Activated naive CD4-positive, alpha-beta T cell treated with anti-CD3 and anti-CD28 coated beads for 36 hours (primary cell): ENCODE measurements at regions of chr2 and their contacts with region 1.

Region 1: DNA sequence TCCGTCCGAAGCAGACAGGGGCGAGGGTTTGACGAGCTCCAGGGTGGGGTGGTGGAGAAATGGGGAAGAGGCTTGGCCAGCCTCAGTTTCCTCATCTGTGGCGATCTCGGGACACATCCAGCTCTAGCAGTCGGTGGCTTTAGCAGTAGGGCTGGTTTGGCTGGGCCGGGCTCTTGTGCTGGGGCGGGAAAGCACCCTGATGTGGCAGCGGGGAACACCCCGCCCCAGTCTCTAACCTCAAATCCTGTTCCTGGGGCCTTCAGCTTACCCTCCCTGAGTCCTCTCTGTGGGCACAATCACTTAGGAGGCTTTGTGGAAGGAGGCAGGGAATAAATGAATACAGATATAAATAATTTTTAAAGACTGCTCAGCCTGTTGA is 26.5 kb upstream of the MCFD2 start:
- DNase-seq: peak; percentile 83
- H3K4me3 Mint-ChIP-seq: peak overlapping the region; percentile 99
- H3K27ac Mint-ChIP-seq: peak overlapping the region; percentile 100
- H3K4me1 Mint-ChIP-seq: peaks cover 44% of the 10 kb centered on the region
- H3K27me3 Mint-ChIP-seq: no peaks in the 10 kb centered on the region

Region 2: DNA sequence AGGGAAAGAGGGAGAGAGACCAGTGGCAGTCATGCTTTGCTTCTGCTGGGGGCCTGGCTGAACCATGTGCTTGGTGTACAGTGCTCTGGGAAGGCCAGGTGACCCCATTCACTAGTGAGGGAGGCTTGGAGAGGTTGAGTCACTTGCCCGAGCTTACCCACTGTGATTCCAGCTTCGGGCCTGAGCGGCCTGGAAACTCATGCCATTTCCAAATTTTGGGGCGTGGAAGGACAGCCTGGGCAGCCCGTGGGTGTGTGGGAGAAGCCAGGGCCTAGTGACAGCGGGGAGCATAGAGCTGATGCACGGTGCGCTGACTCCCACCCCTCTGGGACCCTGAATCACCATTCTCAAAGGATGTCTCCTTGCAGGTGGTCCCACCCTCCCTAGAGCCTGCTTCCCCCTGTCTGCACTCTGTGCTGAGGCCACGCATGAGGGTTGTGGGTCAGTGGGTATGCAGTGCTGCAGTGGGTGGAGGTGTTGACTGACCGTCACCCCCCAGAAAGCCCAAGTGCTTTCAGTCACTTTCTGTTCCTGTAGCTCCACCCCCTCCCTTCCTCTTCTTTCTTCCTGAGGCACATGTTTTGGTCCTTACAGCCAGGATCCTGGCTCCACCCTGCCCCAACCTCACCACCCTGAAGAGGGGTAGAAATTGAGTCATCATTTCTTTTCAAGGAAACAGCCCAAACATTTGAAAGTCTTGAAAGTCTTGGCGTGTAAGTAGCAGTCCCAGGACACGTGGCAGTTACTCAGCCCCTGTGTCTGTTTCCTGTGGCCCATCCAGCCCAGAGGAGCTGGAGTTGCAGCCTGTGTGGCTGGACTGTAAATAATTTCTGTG is 42.7 kb after region 1 on chr2:
- CTCF ChIA-PET with region 1: interaction called, 6 read pairs
- intact Hi-C with region 1: loop called (anchors 1 kb)
- DNase-seq: peak; percentile 84
- H3K4me3 Mint-ChIP-seq: peak overlapping the region; percentile 8
- H3K27ac Mint-ChIP-seq: peak overlapping the region; percentile 92
- H3K4me1 Mint-ChIP-seq: peaks cover 69% of the 10 kb centered on the region
- H3K27me3 Mint-ChIP-seq: no peaks in the 10 kb centered on the region

Region 3: GRCh38 chr2:47195149-47195548 is 253.0 kb after region 1 on chr2:
- CTCF ChIA-PET with region 1: no interaction called
- intact Hi-C with region 1: no loop called
- DNase-seq: peak; percentile 15
- H3K4me3 Mint-ChIP-seq: no peak overlapping the region
- H3K27ac Mint-ChIP-seq: no peak overlapping the region
- H3K4me1 Mint-ChIP-seq: no peaks in the 10 kb centered on the region
- H3K27me3 Mint-ChIP-seq: peaks cover 3% of the 10 kb centered on the region